Motor neuron (in vitro differentiated cells): ENCODE measurements at regions of chr19 and their contacts with region 1.

Region 1: GRCh38 chr19:47514869-47515588 is at the start of gene NAPA:
- ATAC-seq: peak; percentile 88 to 97 (median 95)
- H3K4me3 ChIP-seq: peak within 1 kb of the TSS; percentile 50 to 88 (median 83)
- H3K27ac ChIP-seq: peak within 1 kb of the TSS; percentile 91 to 96
- H3K4me1 ChIP-seq: peaks cover 11 to 13% of the 10 kb centered on the region in 2 donors
- total RNA-seq, gene NAPA: 65.3 to 168 (median 103) TPM

Region 2: GRCh38 chr19:47423203-47423882 is 91.7 kb before region 1 on chr19:
- in situ Hi-C with region 1: no loop called
- ATAC-seq: no peak
- H3K4me3 ChIP-seq: no peak overlapping the region
- H3K27ac ChIP-seq: peak overlapping the region; percentile 21 to 43
- H3K4me1 ChIP-seq: peaks cover 46 to 49% of the 10 kb centered on the region in 2 donors

Region 3: DNA sequence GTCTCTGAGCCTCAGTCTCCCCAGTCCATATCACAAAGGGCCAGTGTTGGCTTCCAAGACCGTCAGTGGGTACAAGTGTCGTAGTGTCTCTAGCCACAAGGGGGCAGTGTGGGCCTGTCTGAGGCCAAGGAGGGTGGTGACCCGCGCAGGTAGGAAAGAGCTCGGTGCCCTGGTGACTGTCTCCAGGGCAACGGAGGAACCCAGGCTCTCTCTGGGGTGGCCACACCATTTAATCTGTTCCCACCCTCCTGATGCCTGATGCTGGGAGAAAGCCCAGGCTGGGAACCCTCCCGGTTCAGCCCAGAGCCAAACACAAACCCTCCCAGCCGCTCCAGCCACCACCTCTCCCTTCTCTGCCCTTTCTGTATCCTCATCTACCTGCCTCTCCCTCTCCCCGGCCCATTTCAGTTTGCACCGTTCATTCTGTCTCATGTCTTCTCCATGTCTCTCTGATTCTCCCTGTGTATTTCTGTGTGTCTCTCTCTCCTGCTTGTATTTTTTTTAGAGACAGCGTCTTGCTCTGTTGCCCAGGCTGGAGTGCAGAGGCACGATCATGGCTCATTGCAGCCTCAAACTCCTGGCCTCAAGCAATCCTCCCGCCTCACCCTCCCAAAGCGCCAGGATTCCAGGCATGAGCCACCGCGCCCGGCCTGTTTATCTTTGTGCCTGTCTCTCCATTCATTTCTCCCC is 78.2 kb before region 1 on chr19:
- in situ Hi-C with region 1: loop called in 1 of 9 experiments (anchors 10 kb)
- ATAC-seq: peak; percentile 74 to 97 (median 93)
- H3K4me3 ChIP-seq: no peak overlapping the region
- H3K27ac ChIP-seq: no peak overlapping the region
- H3K4me1 ChIP-seq: peaks cover 4 to 5% of the 10 kb centered on the region in 2 donors